H1 (cell line): ENCODE measurements at regions of chr5 and their contacts with region 1.

Region 1: GRCh38 chr5:150615141-150615699 is 25.2 kb upstream of the SYNPO start:
- DNase-seq: no peak
- H3K4me3 ChIP-seq: no peak overlapping the region
- H3K27ac ChIP-seq: no peak overlapping the region
- H3K4me1 ChIP-seq: peaks cover 0 to 16% (median 9%) of the 10 kb centered on the region in 4 experiments; a peak in 4 of 7 replicates
- H3K27me3 ChIP-seq: no peaks in the 10 kb centered on the region; a peak in 2 of 7 replicates
- CTCF ChIP-seq: no peak
- EP300 ChIP-seq: no peak
- POLR2A ChIP-seq: no peak
- RAD21 ChIP-seq: no peak

Region 2: DNA sequence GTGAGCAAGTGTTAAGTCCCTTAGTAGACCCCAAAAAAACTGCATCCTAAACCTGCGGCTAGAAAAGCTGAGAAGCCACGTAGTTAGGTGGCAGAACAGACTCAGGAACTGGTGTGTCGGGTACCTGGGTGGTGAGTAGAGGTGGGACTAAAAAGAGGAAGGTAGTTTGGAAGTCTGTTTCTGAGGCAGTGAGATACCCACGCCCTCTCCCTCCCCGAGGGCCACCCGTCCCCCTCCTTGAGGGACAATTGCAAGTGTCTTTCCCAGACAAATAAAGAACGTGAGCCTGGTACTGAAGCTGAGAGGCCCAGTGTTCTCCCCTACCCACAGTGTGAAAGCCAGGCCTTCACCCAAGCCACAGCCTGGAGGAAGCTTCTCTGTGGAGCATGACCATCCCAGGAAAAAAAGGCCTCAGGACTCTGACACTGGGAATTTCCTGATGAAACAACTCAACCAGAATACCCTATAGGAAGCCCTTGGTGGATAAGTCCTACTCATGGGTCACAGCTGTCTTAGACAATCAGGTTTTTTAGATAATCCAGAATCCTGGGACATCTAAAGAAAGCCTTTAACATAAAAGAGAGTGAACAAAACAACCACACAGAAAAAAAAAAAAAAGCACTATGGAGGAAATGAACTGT is 195.5 kb before region 1 on chr5:
- CTCF ChIA-PET with region 1: no interaction called
- POLR2A ChIA-PET with region 1: no interaction called
- DNase-seq: no peak
- H3K4me3 ChIP-seq: no peak overlapping the region
- H3K27ac ChIP-seq: no peak overlapping the region
- H3K4me1 ChIP-seq: no peaks in the 10 kb centered on the region
- H3K27me3 ChIP-seq: no peaks in the 10 kb centered on the region; a peak in 1 of 7 replicates
- CTCF ChIP-seq: no peak
- EP300 ChIP-seq: no peak
- POLR2A ChIP-seq: no peak
- RAD21 ChIP-seq: no peak

Region 3: DNA sequence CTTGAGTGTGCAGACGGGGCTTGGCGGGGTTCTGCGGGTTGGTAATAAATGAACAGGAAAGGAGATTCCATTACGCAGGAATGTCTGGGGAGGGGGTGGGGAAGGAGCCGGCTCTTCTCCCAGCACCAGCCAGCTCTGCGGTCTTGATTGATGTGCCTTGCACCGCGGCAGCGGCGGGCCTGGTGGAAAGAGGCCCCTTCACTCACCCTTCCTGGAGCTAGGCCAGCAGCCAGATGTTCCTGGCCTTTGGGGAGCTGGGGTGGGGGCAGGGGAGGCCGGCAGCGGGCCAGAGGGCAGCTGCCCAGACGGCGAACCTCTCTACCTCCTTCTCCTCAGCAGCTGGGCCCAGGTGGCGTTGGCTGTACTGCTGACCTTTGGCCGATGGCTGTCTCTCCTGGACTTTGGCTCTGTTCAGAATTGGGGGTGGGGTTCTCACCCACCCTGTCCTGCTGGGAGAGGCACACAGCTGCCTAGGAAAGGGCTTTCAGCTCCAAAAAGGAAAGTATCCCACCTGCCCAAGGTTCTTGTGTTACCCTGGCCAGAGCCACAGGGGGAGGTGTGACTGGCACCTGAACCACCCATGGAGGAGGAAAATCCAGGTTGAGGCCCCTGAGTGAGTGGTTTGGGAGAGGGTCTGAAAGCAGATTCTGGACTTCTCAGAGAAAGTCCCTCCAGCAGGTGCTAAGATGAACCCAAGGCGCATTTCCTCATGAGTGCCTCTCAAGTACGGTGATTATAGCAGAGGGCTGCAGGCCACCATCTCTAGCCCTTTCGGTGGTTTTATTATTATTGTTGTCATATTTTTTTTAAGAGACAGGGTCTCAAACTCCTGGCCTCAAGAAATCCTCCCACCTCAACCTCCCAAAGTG is 32.7 kb before region 1 on chr5:
- CTCF ChIA-PET with region 1: interaction called, 30 read pairs
- POLR2A ChIA-PET with region 1: interaction called, 4 read pairs
- DNase-seq: no peak
- H3K4me3 ChIP-seq: no peak overlapping the region
- H3K27ac ChIP-seq: no peak overlapping the region
- H3K4me1 ChIP-seq: peaks cover 0 to 2% (median 0%) of the 10 kb centered on the region in 4 experiments; a peak in 1 of 7 replicates
- H3K27me3 ChIP-seq: no peaks in the 10 kb centered on the region
- CTCF ChIP-seq: no peak
- EP300 ChIP-seq: no peak
- POLR2A ChIP-seq: no peak
- RAD21 ChIP-seq: no peak

Region 4: GRCh38 chr5:150600616-150601490 is 14.4 kb before region 1 on chr5:
- CTCF ChIA-PET with region 1: interaction called, 45 read pairs
- POLR2A ChIA-PET with region 1: no interaction called
- DNase-seq: no peak
- H3K4me3 ChIP-seq: no peak overlapping the region
- H3K27ac ChIP-seq: no peak overlapping the region
- H3K4me1 ChIP-seq: peaks cover 0 to 2% (median 0%) of the 10 kb centered on the region in 4 experiments; a peak in 1 of 7 replicates
- H3K27me3 ChIP-seq: no peaks in the 10 kb centered on the region
- CTCF ChIP-seq: no peak
- EP300 ChIP-seq: no peak
- POLR2A ChIP-seq: no peak
- RAD21 ChIP-seq: no peak

Region 5: DNA sequence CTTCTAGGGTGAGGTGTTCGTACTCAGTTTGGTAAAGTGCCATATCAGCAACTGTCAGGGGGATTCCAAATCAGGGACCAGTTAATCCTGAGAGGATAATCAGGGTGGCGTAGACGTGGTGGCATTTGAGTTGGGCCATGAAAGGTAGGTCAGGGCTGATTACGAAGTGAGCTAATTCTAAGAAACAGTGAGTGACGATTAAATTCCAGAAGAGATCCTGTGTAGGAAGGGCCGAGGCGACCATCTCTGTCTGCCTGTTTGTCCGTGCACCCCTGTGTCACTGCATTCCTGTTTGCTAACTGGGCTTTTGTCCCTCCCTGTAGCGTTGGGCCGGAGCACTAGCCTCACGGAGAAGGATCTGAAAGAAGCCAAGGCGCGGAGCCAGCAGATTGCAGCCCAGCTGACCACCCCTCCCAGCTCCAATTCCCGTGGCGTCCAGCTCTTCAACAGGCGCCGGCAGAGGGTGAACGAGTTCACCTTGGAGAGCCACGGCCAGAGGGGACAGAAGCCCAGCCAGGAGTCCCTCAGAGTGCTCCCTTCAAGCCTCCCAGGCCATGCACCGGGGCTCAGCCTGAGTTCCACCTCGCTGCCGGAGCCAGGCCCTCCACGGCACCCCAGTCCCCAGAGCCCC is 32.5 kb after region 1 on chr5:
- CTCF ChIA-PET with region 1: interaction called, 28 read pairs
- POLR2A ChIA-PET with region 1: no interaction called
- DNase-seq: no peak
- H3K4me3 ChIP-seq: no peak overlapping the region
- H3K27ac ChIP-seq: no peak overlapping the region
- H3K4me1 ChIP-seq: peaks cover 0 to 6% (median 4%) of the 10 kb centered on the region in 4 experiments; a peak in 4 of 7 replicates
- H3K27me3 ChIP-seq: no peaks in the 10 kb centered on the region
- CTCF ChIP-seq: no peak
- EP300 ChIP-seq: no peak
- POLR2A ChIP-seq: no peak
- RAD21 ChIP-seq: no peak